Activated T-helper 1 cell treated with anti-CD3 and anti-CD28 coated beads, Interleukin-12 subunit alpha, Interleukin-12 subunit beta, Interleukin-2, Interleukin-4 antibody, amounts not matched to agents 30 ng/mL and 10 ng/mL and 1 ng/mL, durations not matched to agents 14 hours and 24 hours and 36 hours (primary cell): ENCODE measurements at regions of chr16 and their contacts with region 1.

Region 1: GRCh38 chr16:84504420-84505248 is at the start of gene MEAK7:
- DNase-seq: peak; percentile 97
- H3K4me3 Mint-ChIP-seq: peak within 1 kb of the TSS; percentile 85
- H3K27ac Mint-ChIP-seq: peak within 1 kb of the TSS; percentile 81
- H3K4me1 Mint-ChIP-seq: peaks cover 46% of the 10 kb centered on the region
- H3K27me3 Mint-ChIP-seq: no peaks in the 10 kb centered on the region
- total RNA-seq, gene MEAK7: 10.6 and 10.9 TPM in 2 replicates

Region 2: DNA sequence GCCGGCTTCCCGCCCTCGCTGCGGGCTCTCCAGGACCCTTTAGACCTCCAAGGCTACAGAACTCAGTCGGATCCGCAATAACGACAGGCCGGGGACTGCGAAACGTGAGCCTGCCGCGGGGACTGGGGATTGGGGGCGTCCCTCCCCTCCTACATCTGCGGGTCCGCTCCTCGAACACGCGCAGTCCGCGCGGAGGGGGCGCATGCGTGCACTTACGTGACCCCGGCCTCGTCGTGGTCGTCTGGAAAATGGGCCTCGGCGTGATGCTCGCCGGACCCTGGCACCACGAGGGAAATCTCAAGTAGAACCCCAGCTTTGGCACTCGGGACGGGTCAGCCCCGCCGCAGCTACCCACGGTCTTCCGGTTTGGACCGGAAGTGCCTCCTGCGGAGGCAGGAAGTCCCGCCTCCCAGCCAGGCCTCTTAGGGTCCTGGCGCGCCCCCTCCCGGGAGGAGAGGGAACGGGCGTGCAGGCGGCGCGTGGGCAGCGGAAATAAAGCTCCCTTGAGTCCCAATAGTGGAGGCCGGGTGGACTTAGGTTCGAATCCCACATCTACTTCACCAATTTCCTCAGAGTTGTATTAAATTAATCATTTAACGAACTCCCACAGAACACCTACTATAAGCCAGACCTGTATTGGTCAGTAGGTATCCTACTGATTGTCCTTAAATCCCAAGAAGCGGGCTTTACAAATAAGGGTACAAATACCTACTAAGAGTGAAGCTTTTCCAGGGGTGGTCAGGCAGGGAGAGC is 317.8 kb before region 1 on chr16 and contains the start of gene TAF1C:
- intact Hi-C with region 1: loop called (anchors 10 kb)
- DNase-seq: peak; percentile 86
- H3K4me3 Mint-ChIP-seq: peak within 1 kb of the TSS; percentile 95
- H3K27ac Mint-ChIP-seq: peak within 1 kb of the TSS; percentile 89
- H3K4me1 Mint-ChIP-seq: peaks cover 6% of the 10 kb centered on the region
- H3K27me3 Mint-ChIP-seq: no peaks in the 10 kb centered on the region
- total RNA-seq, gene TAF1C: 67.9 and 74.4 TPM in 2 replicates

Region 3: DNA sequence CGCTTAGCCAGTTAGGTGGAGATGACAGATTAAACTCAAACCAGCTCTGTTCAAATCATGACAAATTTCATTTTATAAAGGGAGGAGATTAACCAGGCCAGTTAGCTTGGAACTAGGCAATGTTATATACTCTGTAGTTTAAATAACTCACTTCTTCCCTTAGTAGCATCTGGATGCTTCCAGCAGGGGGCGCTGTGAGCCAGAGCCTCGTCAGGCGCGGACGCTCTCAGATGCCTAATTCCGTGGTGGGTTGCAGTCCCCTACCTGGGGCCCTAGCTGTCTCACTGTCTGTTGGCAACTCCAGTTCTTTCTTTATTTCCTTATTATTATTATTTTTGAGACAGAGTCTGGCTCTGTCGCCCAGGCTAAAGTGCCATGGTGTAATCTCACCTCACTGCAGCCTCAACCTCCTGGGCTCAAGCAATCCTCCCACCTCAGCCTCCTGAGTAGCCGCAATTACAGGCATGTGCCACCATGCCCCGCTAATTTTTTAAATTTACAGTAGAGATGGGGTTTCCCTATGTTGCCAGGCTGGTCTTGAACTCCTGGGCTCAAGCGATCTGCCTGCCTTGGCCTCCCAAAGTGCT is 227.3 kb before region 1 on chr16:
- intact Hi-C with region 1: loop called (anchors 1 kb)
- DNase-seq: peak; percentile 53
- H3K4me3 Mint-ChIP-seq: no peak overlapping the region
- H3K27ac Mint-ChIP-seq: no peak overlapping the region
- H3K4me1 Mint-ChIP-seq: no peaks in the 10 kb centered on the region
- H3K27me3 Mint-ChIP-seq: no peaks in the 10 kb centered on the region

Region 4: DNA sequence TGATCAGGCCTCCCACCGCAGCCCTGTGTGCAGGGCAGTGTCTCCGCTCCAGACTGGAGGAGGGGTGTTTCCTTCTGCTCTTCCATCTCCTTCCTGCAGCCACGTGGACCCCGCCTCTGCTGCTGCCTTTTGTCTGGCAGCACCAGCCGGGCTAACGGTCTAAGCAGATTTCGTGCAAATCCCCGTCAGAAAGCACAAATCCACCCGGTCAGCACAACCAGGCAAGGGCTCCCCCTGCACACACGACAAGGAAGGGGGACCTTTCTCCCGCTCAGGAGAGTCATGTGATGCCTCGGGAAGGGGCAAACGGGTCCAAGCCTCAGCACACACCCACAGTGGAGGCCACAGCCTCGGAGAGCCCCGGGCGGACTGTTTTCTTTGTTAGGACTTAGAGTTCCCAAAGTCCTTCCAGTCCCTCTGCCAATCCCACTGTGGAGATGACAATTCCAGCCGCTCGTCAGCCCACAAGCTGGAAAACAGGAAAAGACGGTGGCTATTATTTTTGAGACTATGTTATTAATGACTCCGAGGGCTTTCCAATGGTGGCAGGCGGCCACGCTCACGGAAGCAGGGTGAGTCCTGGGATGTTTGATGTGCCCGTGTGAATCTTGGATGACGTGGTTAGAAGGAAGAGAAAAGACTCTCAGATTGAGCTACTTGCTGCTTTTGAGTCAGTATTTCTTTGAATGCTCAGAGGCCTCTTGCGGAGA is 22.3 kb after region 1 on chr16:
- intact Hi-C with region 1: no loop called
- DNase-seq: no peak
- H3K4me3 Mint-ChIP-seq: no peak overlapping the region
- H3K27ac Mint-ChIP-seq: no peak overlapping the region
- H3K4me1 Mint-ChIP-seq: peaks cover 20% of the 10 kb centered on the region
- H3K27me3 Mint-ChIP-seq: no peaks in the 10 kb centered on the region

Region 5: GRCh38 chr16:84599521-84600202 is 95.0 kb after region 1 on chr16:
- intact Hi-C with region 1: loop called (anchors 1 kb)
- DNase-seq: peak; percentile 46
- H3K4me3 Mint-ChIP-seq: peak overlapping the region; percentile 80
- H3K27ac Mint-ChIP-seq: peak overlapping the region; percentile 97
- H3K4me1 Mint-ChIP-seq: peaks cover 84% of the 10 kb centered on the region
- H3K27me3 Mint-ChIP-seq: no peaks in the 10 kb centered on the region

Region 6: GRCh38 chr16:84699712-84700445 is 195.2 kb after region 1 on chr16 and contains the start of gene USP10:
- intact Hi-C with region 1: loop called (anchors 1 kb)
- DNase-seq: peak; percentile 84
- H3K4me3 Mint-ChIP-seq: peak within 1 kb of the TSS; percentile 99
- H3K27ac Mint-ChIP-seq: peak within 1 kb of the TSS; percentile 96
- H3K4me1 Mint-ChIP-seq: peaks cover 38% of the 10 kb centered on the region
- H3K27me3 Mint-ChIP-seq: peaks cover 4% of the 10 kb centered on the region
- total RNA-seq, gene USP10: 153 and 159 TPM in 2 replicates